Adrenal gland (tissue), 19 donors: ENCODE measurements at regions of chr15 and their contacts with region 1.

Region 1: GRCh38 chr15:98076021-98076816 is 115.7 kb downstream of the ARRDC4 start:
- DNase-seq: peak in 6 of 7 donors; percentile 27 to 59 (median 36)
- H3K4me3 ChIP-seq: no peak overlapping the region
- H3K27ac ChIP-seq: peak overlapping the region in 3 of 5 donors; percentile 25 to 58 (median 56)
- H3K4me1 ChIP-seq: no peaks in the 10 kb centered on the region
- H3K27me3 ChIP-seq: no peaks in the 10 kb centered on the region
- CTCF ChIP-seq: no peak
- POLR2A ChIP-seq: no peak

Region 2: GRCh38 chr15:98000249-98001196 is 75.7 kb before region 1 on chr15:
- intact Hi-C with region 1: loop called in 1 of 2 experiments (anchors 10 kb)
- DNase-seq: no peak
- H3K4me3 ChIP-seq: no peak overlapping the region
- H3K27ac ChIP-seq: no peak overlapping the region
- H3K4me1 ChIP-seq: no peaks in the 10 kb centered on the region
- H3K27me3 ChIP-seq: no peaks in the 10 kb centered on the region
- CTCF ChIP-seq: no peak
- POLR2A ChIP-seq: no peak